CD14-positive monocyte (primary cell): ENCODE measurements at regions of chr2 and their contacts with region 1.

Region 1: DNA sequence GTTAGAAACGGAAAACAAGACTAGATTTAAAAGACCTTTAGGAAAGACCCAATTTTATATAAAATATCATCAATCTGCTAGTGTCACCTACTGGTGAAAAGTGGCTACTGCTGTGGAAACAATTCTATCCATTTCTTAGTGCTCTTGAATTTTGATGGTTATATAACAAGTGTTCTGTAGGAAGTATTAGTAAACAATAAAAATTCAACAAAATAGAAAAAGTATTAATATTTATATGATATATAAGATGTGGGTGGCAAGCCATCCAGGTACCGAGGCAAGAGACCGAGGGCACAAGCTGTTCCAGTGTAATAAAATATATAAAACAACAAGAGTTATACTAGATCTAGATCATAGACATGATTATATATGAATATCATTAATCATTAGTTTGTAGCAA is 6.2 kb upstream of the TMEM87B start:
- DNase-seq: peak; percentile 40 to 73 (median 58)
- H3K4me3 ChIP-seq: no peak overlapping the region
- H3K4me3 Mint-ChIP-seq: no peak overlapping the region
- H3K27ac ChIP-seq: no peak overlapping the region
- H3K27ac Mint-ChIP-seq: no peak overlapping the region
- H3K4me1 ChIP-seq: peaks cover 17 to 19% of the 10 kb centered on the region in 2 donors
- H3K4me1 Mint-ChIP-seq: peaks cover 21% of the 10 kb centered on the region
- H3K27me3 ChIP-seq: no peaks in the 10 kb centered on the region
- H3K27me3 Mint-ChIP-seq: peaks cover 2 to 3% (median 3%) of the 10 kb centered on the region in 3 donors
- CTCF ChIP-seq: peak; percentile 83

Region 2: GRCh38 chr2:111883661-111884591 is 165.0 kb before region 1 on chr2 and contains the start of gene ANAPC1:
- intact Hi-C with region 1: loop called in 1 of 2 experiments (anchors 1 kb)
- DNase-seq: peak; percentile 62 to 68 (median 63)
- H3K4me3 ChIP-seq: peak within 1 kb of the TSS; percentile 89 to 98 (median 95)
- H3K4me3 Mint-ChIP-seq: peak within 1 kb of the TSS; percentile 91 to 97
- H3K27ac ChIP-seq: peak within 1 kb of the TSS; percentile 77 to 91
- H3K27ac Mint-ChIP-seq: peak within 1 kb of the TSS; percentile 90 to 95 (median 93)
- H3K4me1 ChIP-seq: peaks cover 10 to 12% of the 10 kb centered on the region in 2 donors
- H3K4me1 Mint-ChIP-seq: peaks cover 10% of the 10 kb centered on the region
- H3K27me3 ChIP-seq: no peaks in the 10 kb centered on the region
- H3K27me3 Mint-ChIP-seq: no peaks in the 10 kb centered on the region
- CTCF ChIP-seq: no peak
- polyA plus RNA-seq, gene ANAPC1: 4.2 to 12.4 (median 6.8) TPM

Region 3: DNA sequence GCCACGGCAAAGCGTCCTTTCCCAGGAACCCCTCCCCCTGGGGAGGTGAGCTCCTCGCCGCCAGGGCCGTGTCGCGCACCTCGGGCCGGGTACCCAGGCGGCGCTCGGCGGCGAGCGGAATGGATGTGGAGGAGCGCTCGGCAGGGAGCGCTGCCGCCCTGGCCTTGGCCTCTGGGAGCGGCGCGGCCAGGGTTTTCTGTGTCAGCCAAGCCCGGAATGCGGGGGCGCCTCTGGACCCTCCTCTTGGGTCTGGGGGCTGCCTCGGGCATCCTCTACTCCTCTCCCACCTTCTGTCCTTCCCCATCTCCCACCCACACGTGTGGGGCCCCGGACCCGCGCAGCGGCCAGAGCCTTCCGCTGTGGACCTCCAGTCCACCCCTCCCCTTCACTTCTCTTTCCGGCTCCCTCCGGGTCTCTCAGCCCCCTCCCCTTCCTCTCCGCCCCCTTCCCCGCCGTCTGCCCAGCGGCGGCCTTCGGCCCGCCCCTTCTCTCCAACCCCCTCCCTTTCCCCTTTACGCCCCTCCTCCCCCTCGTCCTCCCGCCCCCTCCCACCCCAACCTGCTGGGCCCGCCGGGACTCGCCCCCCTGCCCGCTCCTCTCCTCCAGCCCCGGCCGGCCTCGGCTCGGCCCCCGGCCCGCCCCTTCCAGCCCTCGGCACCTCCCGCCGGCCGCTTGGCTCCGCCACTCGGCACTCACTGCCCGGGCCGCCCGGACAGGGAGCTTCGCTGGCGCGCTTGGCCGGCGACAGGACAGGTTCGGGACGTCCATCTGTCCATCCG is 150.8 kb before region 1 on chr2 and contains the start of gene MERTK:
- intact Hi-C with region 1: loop called (anchors 5 kb)
- DNase-seq: peak; percentile 35 to 51 (median 35)
- H3K4me3 ChIP-seq: peak within 1 kb of the TSS; percentile 42 to 80 (median 73)
- H3K4me3 Mint-ChIP-seq: peak within 1 kb of the TSS; percentile 85 to 93
- H3K27ac ChIP-seq: peak within 1 kb of the TSS in 1 of 2 donors; percentile 46
- H3K27ac Mint-ChIP-seq: peak within 1 kb of the TSS in 5 of 7 donors; percentile 26 to 75 (median 48)
- H3K4me1 ChIP-seq: peaks cover 30 to 49% of the 10 kb centered on the region in 2 donors
- H3K4me1 Mint-ChIP-seq: peaks cover 33% of the 10 kb centered on the region
- H3K27me3 ChIP-seq: peaks cover 9 to 34% of the 10 kb centered on the region in 2 donors
- H3K27me3 Mint-ChIP-seq: peaks cover 20 to 36% (median 23%) of the 10 kb centered on the region in 3 donors
- CTCF ChIP-seq: peak; percentile 61
- polyA plus RNA-seq, gene MERTK: 4.1 to 17.0 (median 4.2) TPM